CD8-positive, alpha-beta memory T cell (primary cell): ENCODE measurements at regions of chr20 and their contacts with region 1.

Region 1: GRCh38 chr20:49219089-49219923 is at the start of gene DDX27:
- DNase-seq: peak; percentile 94 to 98 (median 97)
- H3K4me3 ChIP-seq: peak within 1 kb of the TSS; percentile 100
- H3K4me3 Mint-ChIP-seq: peak within 1 kb of the TSS; percentile 87 to 99 (median 95)
- H3K27ac ChIP-seq: peak within 1 kb of the TSS; percentile 98
- H3K27ac Mint-ChIP-seq: peak within 1 kb of the TSS; percentile 80 to 100 (median 98)
- H3K4me1 ChIP-seq: peaks cover 23% of the 10 kb centered on the region
- H3K4me1 Mint-ChIP-seq: peaks cover 27 to 40% (median 32%) of the 10 kb centered on the region in 3 donors
- H3K27me3 ChIP-seq: no peaks in the 10 kb centered on the region
- H3K27me3 Mint-ChIP-seq: peaks cover 0 to 3% of the 10 kb centered on the region in 2 donors
- total RNA-seq, gene DDX27: 67.3 to 68.7 TPM

Region 2: DNA sequence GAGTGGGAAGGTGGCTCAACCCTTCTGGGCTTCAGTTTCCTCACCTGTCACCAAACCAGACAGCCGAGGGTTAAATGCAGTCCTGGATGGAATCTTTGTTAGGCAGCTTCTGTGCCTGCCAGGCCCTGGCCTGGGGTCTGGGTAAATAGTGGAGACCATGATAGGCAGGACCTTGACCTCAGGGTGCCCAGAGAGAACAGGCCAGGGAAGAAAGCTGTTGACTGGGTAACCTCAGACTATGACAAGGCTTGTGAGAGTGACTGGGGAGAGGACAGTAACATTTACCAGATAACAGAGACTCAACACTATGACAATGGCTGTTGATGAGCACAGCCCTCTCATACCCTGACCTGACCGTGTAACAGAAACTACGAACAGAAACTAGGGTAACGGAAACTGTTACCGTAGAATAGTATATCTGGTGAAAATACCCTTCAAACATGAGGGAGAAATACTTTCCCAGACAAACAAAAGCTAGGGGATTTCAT is 609.8 kb before region 1 on chr20:
- CTCF ChIA-PET with region 1: no interaction called
- POLR2A ChIA-PET with region 1: no interaction called
- DNase-seq: peak in 1 of 5 donors; percentile 21
- H3K4me3 ChIP-seq: no peak overlapping the region
- H3K4me3 Mint-ChIP-seq: no peak overlapping the region
- H3K27ac ChIP-seq: no peak overlapping the region
- H3K27ac Mint-ChIP-seq: peak overlapping the region in 1 of 8 donors; percentile 13
- H3K4me1 ChIP-seq: no peaks in the 10 kb centered on the region
- H3K4me1 Mint-ChIP-seq: peaks cover 0 to 5% (median 4%) of the 10 kb centered on the region in 3 donors
- H3K27me3 ChIP-seq: no peaks in the 10 kb centered on the region
- H3K27me3 Mint-ChIP-seq: no peaks in the 10 kb centered on the region

Region 3: DNA sequence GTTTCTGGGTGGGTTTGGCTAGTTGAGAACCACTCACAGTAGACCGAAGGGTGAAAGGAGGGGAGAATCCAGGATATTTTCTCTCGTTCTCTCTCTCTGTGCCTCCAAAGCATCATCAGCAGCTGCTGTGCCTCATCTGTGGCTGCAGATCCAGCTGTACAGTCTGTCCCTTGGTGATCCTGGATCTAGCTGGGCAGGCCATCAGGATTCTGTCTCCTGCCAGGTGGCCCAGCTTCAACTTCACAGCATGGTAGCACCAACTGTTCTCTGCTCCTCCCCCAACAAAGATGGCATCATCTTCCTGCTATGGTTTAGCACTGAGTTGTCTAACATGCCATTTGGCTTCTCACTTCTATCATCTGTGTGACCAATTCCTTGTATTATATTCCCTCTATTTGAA is 326.5 kb before region 1 on chr20:
- CTCF ChIA-PET with region 1: no interaction called
- POLR2A ChIA-PET with region 1: no interaction called
- DNase-seq: no peak
- H3K4me3 ChIP-seq: no peak overlapping the region
- H3K4me3 Mint-ChIP-seq: no peak overlapping the region
- H3K27ac ChIP-seq: no peak overlapping the region
- H3K27ac Mint-ChIP-seq: peak overlapping the region in 1 of 8 donors; percentile 29
- H3K4me1 ChIP-seq: no peaks in the 10 kb centered on the region
- H3K4me1 Mint-ChIP-seq: peaks cover 0 to 1% (median 0%) of the 10 kb centered on the region in 3 donors
- H3K27me3 ChIP-seq: peaks cover 4% of the 10 kb centered on the region
- H3K27me3 Mint-ChIP-seq: peaks cover 0 to 4% of the 10 kb centered on the region in 2 donors

Region 4: DNA sequence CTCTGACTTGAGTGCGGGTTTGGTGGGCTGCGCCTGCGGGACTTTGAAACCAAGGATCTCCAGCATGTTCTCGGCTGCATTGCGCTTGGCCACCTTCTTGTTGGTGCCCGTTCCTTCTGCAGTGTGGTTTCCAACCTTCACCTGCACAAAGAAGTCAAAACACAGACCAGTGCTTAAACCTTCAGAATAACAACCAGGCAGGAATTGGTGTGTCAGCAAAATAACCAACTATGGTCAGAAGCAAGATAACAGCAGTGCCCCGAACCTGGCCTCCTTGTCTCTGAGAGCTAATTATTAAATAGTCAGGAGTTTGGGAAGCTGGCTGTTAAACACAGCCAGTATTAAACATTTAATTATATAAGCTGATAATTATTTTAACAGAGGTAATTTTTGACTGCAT is 99.3 kb before region 1 on chr20:
- CTCF ChIA-PET with region 1: interaction called, 11 read pairs
- POLR2A ChIA-PET with region 1: interaction called, 5 read pairs
- DNase-seq: no peak
- H3K4me3 ChIP-seq: no peak overlapping the region
- H3K4me3 Mint-ChIP-seq: no peak overlapping the region
- H3K27ac ChIP-seq: no peak overlapping the region
- H3K27ac Mint-ChIP-seq: peak overlapping the region in 3 of 8 donors; percentile 46 to 71 (median 61)
- H3K4me1 ChIP-seq: no peaks in the 10 kb centered on the region
- H3K4me1 Mint-ChIP-seq: peaks cover 0 to 1% (median 0%) of the 10 kb centered on the region in 3 donors
- H3K27me3 ChIP-seq: no peaks in the 10 kb centered on the region
- H3K27me3 Mint-ChIP-seq: no peaks in the 10 kb centered on the region

Region 5: DNA sequence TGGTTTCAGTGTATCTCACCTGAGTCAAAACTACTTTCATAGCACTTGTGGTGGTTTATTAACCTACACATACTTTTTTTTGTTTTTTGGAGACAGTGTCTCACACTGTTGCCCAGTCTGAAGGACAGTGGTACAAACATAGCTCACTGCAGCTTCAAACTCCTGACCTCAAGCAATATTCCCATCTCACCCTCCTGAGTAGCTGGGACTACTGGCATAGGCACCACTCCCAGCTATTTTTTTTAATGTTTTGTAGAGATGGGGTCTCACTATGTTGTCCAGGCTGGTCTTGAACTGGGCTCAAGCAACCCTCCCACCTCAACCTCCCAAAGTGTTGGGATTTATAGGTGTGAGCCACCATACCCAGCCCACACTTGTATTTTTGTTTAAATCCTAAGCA is 80.9 kb before region 1 on chr20:
- CTCF ChIA-PET with region 1: interaction called, 98 read pairs
- POLR2A ChIA-PET with region 1: interaction called, 6 read pairs
- DNase-seq: no peak
- H3K4me3 ChIP-seq: no peak overlapping the region
- H3K4me3 Mint-ChIP-seq: no peak overlapping the region
- H3K27ac ChIP-seq: no peak overlapping the region
- H3K27ac Mint-ChIP-seq: peak overlapping the region in 2 of 8 donors; percentile 55 to 84
- H3K4me1 ChIP-seq: no peaks in the 10 kb centered on the region
- H3K4me1 Mint-ChIP-seq: peaks cover 4 to 26% (median 23%) of the 10 kb centered on the region in 3 donors
- H3K27me3 ChIP-seq: no peaks in the 10 kb centered on the region
- H3K27me3 Mint-ChIP-seq: peaks cover 0 to 2% of the 10 kb centered on the region in 2 donors

Region 6: DNA sequence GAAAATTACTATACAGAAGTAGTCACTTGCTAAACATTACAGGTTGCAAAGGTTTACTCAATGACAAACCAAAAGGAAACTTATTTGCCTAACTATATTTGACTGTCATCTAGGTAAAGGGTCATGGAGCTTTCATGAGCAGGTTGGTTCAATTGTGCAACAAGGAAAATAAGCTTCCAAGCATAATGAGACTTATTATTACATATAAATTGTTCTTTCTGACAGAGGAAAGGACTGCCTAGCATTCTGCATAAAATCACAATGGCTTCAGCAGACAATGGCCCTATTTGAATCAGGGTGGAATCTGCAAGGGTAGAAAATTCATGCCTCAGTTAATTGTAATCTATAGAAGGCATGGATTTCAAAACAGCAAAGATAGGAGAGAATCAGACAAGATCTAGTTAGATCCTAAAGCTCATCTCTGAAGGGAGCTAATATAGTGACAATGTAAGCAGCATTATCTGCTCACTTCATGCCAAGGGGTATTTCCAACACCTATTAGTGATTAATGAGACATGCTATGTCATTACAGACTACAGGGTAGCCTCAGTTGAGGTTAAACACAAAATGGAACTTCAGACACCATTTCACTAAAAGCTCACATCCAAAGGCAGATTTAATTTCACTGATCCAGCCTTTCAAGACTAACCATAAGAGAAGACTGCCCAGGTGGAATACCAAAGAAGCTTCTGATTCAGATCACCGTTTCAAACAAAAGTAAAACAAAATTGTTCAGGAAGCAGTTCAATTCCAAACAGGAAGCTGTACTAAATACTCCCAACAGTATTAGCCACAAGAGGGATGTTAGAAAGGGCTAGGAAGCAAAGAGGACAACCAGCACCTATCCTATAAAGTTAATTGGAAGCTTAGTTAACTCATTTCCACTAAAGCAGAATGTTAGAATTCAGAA is 39.7 kb before region 1 on chr20:
- CTCF ChIA-PET with region 1: interaction called, 14 read pairs
- POLR2A ChIA-PET with region 1: no interaction called
- DNase-seq: no peak
- H3K4me3 ChIP-seq: no peak overlapping the region
- H3K4me3 Mint-ChIP-seq: peak overlapping the region in 1 of 7 donors; percentile 13
- H3K27ac ChIP-seq: no peak overlapping the region
- H3K27ac Mint-ChIP-seq: peak overlapping the region in 7 of 8 donors; percentile 5 to 77 (median 30)
- H3K4me1 ChIP-seq: peaks cover 31% of the 10 kb centered on the region
- H3K4me1 Mint-ChIP-seq: peaks cover 52 to 71% (median 54%) of the 10 kb centered on the region in 3 donors
- H3K27me3 ChIP-seq: no peaks in the 10 kb centered on the region
- H3K27me3 Mint-ChIP-seq: no peaks in the 10 kb centered on the region

Region 7: GRCh38 chr20:49237531-49237930 is 18.2 kb after region 1 on chr20:
- CTCF ChIA-PET with region 1: interaction called, 12 read pairs
- POLR2A ChIA-PET with region 1: no interaction called
- DNase-seq: no peak
- H3K4me3 ChIP-seq: no peak overlapping the region
- H3K4me3 Mint-ChIP-seq: no peak overlapping the region
- H3K27ac ChIP-seq: no peak overlapping the region
- H3K27ac Mint-ChIP-seq: peak overlapping the region in 6 of 8 donors; percentile 5 to 62 (median 27)
- H3K4me1 ChIP-seq: no peaks in the 10 kb centered on the region
- H3K4me1 Mint-ChIP-seq: peaks cover 0 to 4% (median 0%) of the 10 kb centered on the region in 3 donors
- H3K27me3 ChIP-seq: no peaks in the 10 kb centered on the region
- H3K27me3 Mint-ChIP-seq: no peaks in the 10 kb centered on the region

Region 8: DNA sequence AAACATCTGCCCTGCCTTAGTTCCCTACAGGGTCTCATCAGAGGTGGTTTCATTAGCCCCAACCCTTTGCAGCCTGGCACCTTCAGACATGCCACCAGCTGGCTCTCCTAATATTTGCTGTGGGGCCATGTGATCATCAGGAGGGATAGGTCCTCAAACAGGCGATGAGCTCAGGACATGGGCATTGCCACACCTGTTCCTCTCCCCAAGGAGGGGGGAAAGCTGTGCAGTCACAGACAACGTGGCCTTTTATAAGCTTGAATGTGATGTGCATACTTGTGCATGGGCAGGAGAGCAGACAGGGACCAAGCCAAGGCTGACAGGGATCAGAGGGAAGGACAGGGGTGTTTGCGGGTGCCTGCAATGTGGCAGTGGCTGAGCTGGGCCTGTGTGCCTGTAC is 137.4 kb after region 1 on chr20:
- CTCF ChIA-PET with region 1: no interaction called
- POLR2A ChIA-PET with region 1: no interaction called
- DNase-seq: no peak
- H3K4me3 ChIP-seq: no peak overlapping the region
- H3K4me3 Mint-ChIP-seq: no peak overlapping the region
- H3K27ac ChIP-seq: no peak overlapping the region
- H3K27ac Mint-ChIP-seq: no peak overlapping the region
- H3K4me1 ChIP-seq: no peaks in the 10 kb centered on the region
- H3K4me1 Mint-ChIP-seq: no peaks in the 10 kb centered on the region
- H3K27me3 ChIP-seq: no peaks in the 10 kb centered on the region
- H3K27me3 Mint-ChIP-seq: peaks cover 10 to 39% of the 10 kb centered on the region in 2 donors